ENCODE measurements at regions of chr19 and their contacts with region 1.

Region 1: DNA sequence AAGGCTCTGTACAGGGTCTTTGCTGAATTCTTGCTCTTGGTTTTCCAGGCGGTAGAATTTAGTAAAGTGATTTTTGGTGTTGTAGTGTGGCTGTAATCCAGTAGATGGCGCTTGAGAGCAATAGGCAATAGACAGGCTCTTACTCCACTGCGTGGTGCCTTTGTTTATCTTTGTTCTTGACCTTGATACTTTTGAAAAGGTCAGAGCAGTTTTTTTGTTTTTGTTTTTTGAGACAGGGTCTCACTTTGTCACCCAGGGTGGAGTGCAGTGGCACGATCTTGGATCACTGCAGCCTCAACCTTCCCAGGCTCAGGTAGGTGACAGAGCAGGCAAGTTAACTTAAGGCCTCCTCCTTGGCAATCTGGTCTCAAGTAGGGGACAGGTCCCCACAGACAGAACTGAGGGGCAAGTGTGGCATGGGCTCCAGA is 12.2 kb upstream of the LILRA5 start:
- DNase-seq: peak; percentile 52
- H3K4me3 ChIP-seq: no peak overlapping the region
- H3K27ac ChIP-seq: no peak overlapping the region
- H3K4me1 ChIP-seq: no peaks in the 10 kb centered on the region
- H3K27me3 ChIP-seq: peaks cover 10% of the 10 kb centered on the region
- CTCF ChIP-seq: peak; percentile 87

Region 2: DNA sequence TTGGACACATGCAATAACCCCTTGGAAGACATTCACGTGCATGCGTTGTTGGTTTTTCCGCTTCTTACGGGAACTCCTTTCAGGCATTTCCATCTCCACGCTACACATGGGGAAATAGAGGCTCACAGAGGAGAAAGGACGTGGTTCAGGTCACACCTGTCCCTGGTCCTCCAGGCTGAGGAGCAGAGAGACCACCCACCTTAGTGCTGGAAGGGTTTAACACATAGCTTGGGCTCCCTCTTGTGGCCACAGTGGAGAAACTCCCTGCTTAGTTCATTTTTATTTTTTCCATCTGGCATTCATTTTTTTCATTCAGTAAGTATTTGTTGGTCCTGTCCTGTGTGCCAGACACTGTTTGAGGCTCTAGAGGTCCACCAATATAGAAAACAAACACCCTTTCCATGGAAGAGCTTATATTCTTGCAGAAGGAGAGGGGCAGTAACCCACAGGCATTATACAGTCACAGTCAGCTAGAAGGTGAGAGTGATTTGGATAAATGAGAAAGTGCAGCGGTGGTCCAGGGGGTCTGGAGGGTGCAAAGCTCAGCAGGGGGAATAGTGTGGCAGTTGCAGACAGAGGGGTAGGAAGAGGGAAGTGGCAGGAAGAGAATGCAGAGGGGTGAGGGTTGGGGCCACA is 65.9 kb after region 1 on chr19:
- CTCF ChIA-PET with region 1: interaction called, 10 read pairs
- POLR2A ChIA-PET with region 1: no interaction called
- intact Hi-C with region 1: loop called (anchors 1 kb)
- DNase-seq: peak; percentile 74
- H3K4me3 ChIP-seq: no peak overlapping the region
- H3K27ac ChIP-seq: no peak overlapping the region
- H3K4me1 ChIP-seq: peaks cover 10% of the 10 kb centered on the region
- H3K27me3 ChIP-seq: peaks cover 29% of the 10 kb centered on the region
- CTCF ChIP-seq: peak; percentile 85

Region 3: GRCh38 chr19:54473021-54473891 is 148.0 kb after region 1 on chr19 and contains the start of gene CDC42EP5:
- CTCF ChIA-PET with region 1: no interaction called
- POLR2A ChIA-PET with region 1: interaction called, 12 read pairs
- intact Hi-C with region 1: no loop called
- DNase-seq: peak; percentile 97
- H3K4me3 ChIP-seq: peak within 1 kb of the TSS; percentile 64
- H3K27ac ChIP-seq: peak within 1 kb of the TSS; percentile 97
- H3K4me1 ChIP-seq: peaks cover 33% of the 10 kb centered on the region
- H3K27me3 ChIP-seq: no peaks in the 10 kb centered on the region
- CTCF ChIP-seq: no peak
- total RNA-seq, gene CDC42EP5: 111 and 119 TPM in 2 replicates

Measured in A673 (cell line).